ENCODE measurements at regions of chr5 and their contacts with region 1.

Region 1: GRCh38 chr5:118791926-118792734 is 196.2 kb downstream of the DTWD2 start:
- DNase-seq: peak; percentile 38
- CTCF ChIP-seq: peak; percentile 84

Region 2: DNA sequence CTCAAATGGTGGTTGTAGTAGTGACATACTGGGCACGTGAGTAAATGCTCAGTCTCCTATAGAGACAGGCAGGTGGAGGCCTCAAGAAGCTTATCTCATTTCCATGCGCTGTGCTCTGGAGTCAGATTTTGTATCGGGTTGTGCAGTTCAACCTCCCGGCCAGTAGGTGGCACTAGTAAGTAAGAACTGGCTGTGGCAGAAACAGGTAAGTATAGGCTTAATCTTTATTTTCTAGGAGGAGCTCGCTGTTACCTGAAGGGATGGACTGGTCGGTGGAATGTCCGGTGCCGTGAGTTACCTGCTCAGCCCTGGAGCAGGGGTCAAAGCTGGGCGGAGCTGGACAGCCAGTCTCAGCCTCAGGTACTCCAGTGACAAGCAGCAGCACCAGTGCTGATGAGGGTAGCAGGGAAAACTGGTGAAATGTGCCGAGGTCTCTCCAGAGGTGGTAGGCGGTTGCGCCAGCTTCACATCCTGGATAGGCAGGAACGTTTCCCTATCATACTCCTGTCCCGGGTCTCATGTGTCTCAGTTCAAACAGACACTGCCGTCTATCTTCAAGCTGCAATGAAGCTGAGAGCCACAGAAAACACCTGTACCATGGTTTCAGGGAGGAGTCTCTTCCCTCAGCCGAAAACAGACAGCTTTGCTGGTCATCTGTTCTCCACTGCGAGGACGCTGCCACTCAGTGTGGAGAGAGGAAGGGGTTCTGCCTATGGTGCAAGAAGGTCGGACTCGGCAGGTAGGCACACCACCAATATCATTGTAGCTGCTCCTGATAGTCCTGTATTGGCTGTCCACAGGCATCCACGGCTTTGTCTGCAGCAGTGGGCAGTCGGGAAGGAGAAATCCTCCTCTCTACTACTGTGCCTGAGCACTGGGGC is 1337.2 kb before region 1 on chr5:
- CTCF ChIA-PET with region 1: interaction called, 35 read pairs
- POLR2A ChIA-PET with region 1: no interaction called
- DNase-seq: peak; percentile 55
- CTCF ChIP-seq: peak; percentile 87

Region 3: GRCh38 chr5:118698774-118699173 is 93.4 kb before region 1 on chr5:
- CTCF ChIA-PET with region 1: interaction called, 16 read pairs
- POLR2A ChIA-PET with region 1: no interaction called
- DNase-seq: no peak
- CTCF ChIP-seq: peak; percentile 14

Region 4: GRCh38 chr5:118775799-118776499 is 16.2 kb before region 1 on chr5:
- CTCF ChIA-PET with region 1: interaction called, 53 read pairs
- POLR2A ChIA-PET with region 1: no interaction called
- DNase-seq: no peak
- CTCF ChIP-seq: no peak

Region 5: DNA sequence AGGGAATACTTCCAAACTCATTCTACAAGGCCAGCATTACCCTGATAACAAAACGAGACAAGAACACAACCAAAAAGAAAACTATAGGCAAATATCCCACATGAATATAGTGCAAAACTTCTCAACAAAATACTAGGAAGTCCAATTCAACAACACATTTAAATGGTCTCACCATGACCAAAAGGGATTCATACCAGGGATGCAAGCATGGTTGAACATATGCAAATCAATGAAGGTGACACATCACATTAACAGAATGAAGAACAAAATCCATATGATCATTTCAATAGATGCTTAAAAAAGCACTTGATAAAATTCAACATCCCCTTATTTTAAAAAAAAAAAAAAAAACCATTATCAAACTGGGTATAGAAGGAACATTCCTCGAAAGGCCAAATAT is 10.2 kb after region 1 on chr5:
- CTCF ChIA-PET with region 1: interaction called, 29 read pairs
- POLR2A ChIA-PET with region 1: no interaction called
- DNase-seq: no peak
- CTCF ChIP-seq: no peak

Region 6: GRCh38 chr5:118818604-118819003 is 26.5 kb after region 1 on chr5:
- CTCF ChIA-PET with region 1: interaction called, 13 read pairs
- POLR2A ChIA-PET with region 1: no interaction called
- DNase-seq: no peak
- CTCF ChIP-seq: no peak

Measured in GM10248 (cell line).